Dorsolateral prefrontal cortex (tissue), 120 donors: ENCODE measurements at regions of chr7 and their contacts with region 1.

Region 1: GRCh38 chr7:72161534-72161933 is 250.6 kb downstream of the CALN1 start:
- DNase-seq: no peak
- H3K4me3 ChIP-seq: no peak overlapping the region
- H3K27ac ChIP-seq: no peak overlapping the region
- H3K27me3 ChIP-seq: no peaks in the 10 kb centered on the region
- CTCF ChIP-seq: peak in 5 of 56 donors; percentile 9 to 16 (median 12)

Region 2: DNA sequence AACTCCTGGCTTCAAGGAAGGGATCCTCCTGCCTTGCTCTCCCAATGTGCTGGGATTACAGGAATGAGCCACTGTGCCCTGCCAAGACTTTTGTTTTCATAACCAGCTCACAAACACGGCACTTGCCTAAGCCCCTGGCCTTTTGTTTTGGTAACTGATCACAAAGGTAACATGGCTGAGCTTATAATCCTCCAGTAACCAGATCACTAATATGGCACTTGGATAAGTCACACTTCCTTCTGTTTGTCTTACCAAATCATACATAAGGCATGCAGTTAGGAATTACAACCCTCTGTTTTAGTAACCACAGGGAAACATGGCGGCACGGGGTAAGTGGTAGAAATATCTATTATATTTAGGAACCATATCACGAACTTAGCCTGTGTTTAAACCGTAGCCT is 326.5 kb before region 1 on chr7:
- intact Hi-C with region 1: no loop called
- DNase-seq: no peak
- H3K4me3 ChIP-seq: no peak overlapping the region
- H3K27ac ChIP-seq: no peak overlapping the region
- H3K27me3 ChIP-seq: no peaks in the 10 kb centered on the region
- CTCF ChIP-seq: no peak

Region 3: GRCh38 chr7:72313906-72314305 is 152.4 kb after region 1 on chr7:
- intact Hi-C with region 1: loop called in 1 of 2 experiments (anchors 10 kb)
- DNase-seq: peak in 3 of 10 donors; percentile 9 to 34 (median 31)
- H3K4me3 ChIP-seq: no peak overlapping the region
- H3K27ac ChIP-seq: peak overlapping the region in 2 of 59 donors; percentile 48 to 55
- H3K27me3 ChIP-seq: no peaks in the 10 kb centered on the region
- CTCF ChIP-seq: no peak